CD8-positive, alpha-beta T cell (primary cell): ENCODE measurements at regions of chr7 and their contacts with region 1.

Region 1: GRCh38 chr7:140653319-140654108 is 12.9 kb upstream of the DENND2A start:
- DNase-seq: peak in 5 of 9 experiments; percentile 25 to 69 (median 55)
- ATAC-seq: peak; percentile 33
- H3K4me3 ChIP-seq: no peak overlapping the region
- H3K4me3 Mint-ChIP-seq: no peak overlapping the region
- H3K27ac ChIP-seq: no peak overlapping the region
- H3K27ac Mint-ChIP-seq: no peak overlapping the region
- H3K4me1 ChIP-seq: peaks cover 17% of the 10 kb centered on the region
- H3K4me1 Mint-ChIP-seq: peaks cover 22% of the 10 kb centered on the region
- H3K27me3 ChIP-seq: no peaks in the 10 kb centered on the region
- H3K27me3 Mint-ChIP-seq: peaks cover 15% of the 10 kb centered on the region
- CTCF ChIP-seq: peak; percentile 91

Region 2: GRCh38 chr7:139950848-139951512 is 702.5 kb before region 1 on chr7:
- CTCF ChIA-PET with region 1: no interaction called
- POLR2A ChIA-PET with region 1: no interaction called
- intact Hi-C with region 1: no loop called
- DNase-seq: no peak
- ATAC-seq: no peak
- H3K4me3 ChIP-seq: no peak overlapping the region
- H3K4me3 Mint-ChIP-seq: no peak overlapping the region
- H3K27ac ChIP-seq: no peak overlapping the region
- H3K27ac Mint-ChIP-seq: no peak overlapping the region
- H3K4me1 ChIP-seq: no peaks in the 10 kb centered on the region
- H3K4me1 Mint-ChIP-seq: no peaks in the 10 kb centered on the region
- H3K27me3 ChIP-seq: no peaks in the 10 kb centered on the region
- H3K27me3 Mint-ChIP-seq: no peaks in the 10 kb centered on the region
- CTCF ChIP-seq: no peak

Region 3: DNA sequence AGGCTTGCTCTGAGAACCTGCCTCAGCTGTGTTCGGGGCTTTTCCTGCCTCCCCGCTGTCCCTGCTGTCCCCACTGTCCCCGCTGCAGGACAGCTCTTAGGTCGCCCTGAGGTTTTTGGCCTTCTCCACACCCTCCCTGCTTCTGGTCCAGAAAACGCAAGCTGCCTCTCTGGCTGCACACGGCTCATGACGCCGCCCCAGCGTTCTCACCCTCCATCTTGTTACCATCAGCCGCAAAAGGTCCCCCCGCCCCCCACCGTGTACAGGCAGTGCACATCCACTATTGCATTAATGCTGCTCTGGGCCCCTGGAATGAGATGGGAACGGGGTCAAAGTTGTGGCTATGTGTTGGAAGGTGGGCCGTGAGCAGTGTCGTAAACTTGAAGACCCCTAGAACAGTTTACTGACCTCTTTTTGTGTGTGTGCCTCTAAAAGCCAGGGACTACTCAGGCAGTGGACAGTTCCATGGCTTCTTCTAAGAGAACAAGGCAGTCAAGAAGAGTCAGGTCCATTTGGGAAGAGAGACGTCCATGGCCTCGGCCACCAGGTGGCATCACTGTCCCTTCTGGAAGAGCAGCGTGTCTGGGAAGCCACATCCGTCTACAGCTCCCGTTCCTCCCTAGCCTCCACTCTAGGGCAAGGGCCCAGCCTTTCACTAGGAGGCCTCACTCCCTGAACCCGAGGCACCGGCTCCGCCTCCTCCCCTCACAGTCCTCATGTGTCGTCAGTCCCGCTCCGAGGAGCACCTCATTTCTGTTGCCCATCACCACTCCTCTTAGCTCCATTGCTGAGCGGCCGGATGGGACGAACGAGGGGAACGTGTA is 135.8 kb before region 1 on chr7:
- CTCF ChIA-PET with region 1: interaction called, 8 read pairs
- POLR2A ChIA-PET with region 1: no interaction called
- intact Hi-C with region 1: loop called (anchors 1 to 5 kb)
- DNase-seq: peak; percentile 16 to 79 (median 69)
- ATAC-seq: peak; percentile 62
- H3K4me3 ChIP-seq: no peak overlapping the region
- H3K4me3 Mint-ChIP-seq: no peak overlapping the region
- H3K27ac ChIP-seq: no peak overlapping the region
- H3K27ac Mint-ChIP-seq: no peak overlapping the region
- H3K4me1 ChIP-seq: no peaks in the 10 kb centered on the region
- H3K4me1 Mint-ChIP-seq: peaks cover 4% of the 10 kb centered on the region
- H3K27me3 ChIP-seq: no peaks in the 10 kb centered on the region
- H3K27me3 Mint-ChIP-seq: peaks cover 9% of the 10 kb centered on the region
- CTCF ChIP-seq: peak; percentile 28

Region 4: DNA sequence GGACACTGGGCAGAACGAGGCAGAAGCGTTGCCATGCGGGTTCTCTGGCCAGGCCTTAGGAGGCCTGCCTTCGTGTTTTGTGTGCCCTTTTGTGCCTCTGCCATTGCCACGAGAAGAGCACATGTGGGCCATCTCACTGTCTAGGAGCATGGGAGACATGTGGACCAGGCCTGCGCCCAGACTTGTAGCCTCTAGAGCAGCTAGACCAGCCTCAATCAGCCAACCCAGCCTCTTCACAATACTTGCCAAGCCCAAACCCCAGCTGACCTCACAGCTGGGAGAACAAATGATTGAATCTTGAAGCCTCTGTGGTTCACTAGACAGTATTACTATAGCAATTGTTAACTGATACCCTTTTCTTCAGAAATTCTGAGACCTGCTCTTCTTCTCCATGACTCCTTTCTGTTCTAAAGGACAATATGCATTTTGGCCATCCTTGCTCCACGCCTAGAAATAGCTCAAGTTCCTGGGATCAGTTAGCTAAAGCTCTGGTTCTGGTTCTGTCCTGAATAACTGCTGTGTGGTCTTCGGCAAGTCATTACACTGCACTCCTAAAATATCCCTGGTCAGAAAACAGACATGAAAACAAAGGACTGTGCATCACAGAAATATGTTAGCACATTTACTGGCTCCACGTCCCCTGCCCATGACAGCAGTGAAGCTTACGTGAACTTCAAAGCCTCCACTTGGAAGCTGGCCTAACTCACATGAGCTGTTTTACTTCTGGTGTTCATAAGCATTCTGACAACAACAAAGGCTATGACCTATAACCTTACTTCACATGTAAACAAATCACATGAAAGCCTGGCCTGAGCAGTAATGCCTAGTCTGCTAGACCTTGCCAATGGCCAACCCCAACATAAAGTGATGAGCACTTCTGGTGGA is 101.9 kb before region 1 on chr7:
- CTCF ChIA-PET with region 1: no interaction called
- POLR2A ChIA-PET with region 1: no interaction called
- intact Hi-C with region 1: no loop called
- DNase-seq: no peak
- ATAC-seq: no peak
- H3K4me3 ChIP-seq: no peak overlapping the region
- H3K4me3 Mint-ChIP-seq: no peak overlapping the region
- H3K27ac ChIP-seq: no peak overlapping the region
- H3K27ac Mint-ChIP-seq: no peak overlapping the region
- H3K4me1 ChIP-seq: no peaks in the 10 kb centered on the region
- H3K4me1 Mint-ChIP-seq: no peaks in the 10 kb centered on the region
- H3K27me3 ChIP-seq: no peaks in the 10 kb centered on the region
- H3K27me3 Mint-ChIP-seq: peaks cover 2% of the 10 kb centered on the region
- CTCF ChIP-seq: no peak

Region 5: GRCh38 chr7:140640727-140641523 is 12.6 kb before region 1 on chr7 and contains the start of gene DENND2A:
- CTCF ChIA-PET with region 1: interaction called, 18 read pairs
- POLR2A ChIA-PET with region 1: no interaction called
- intact Hi-C with region 1: no loop called
- DNase-seq: peak in 1 of 9 experiments; percentile 13
- ATAC-seq: peak; percentile 29
- H3K4me3 ChIP-seq: peak within 1 kb of the TSS; percentile 22 to 39
- H3K4me3 Mint-ChIP-seq: peak within 1 kb of the TSS; percentile 88
- H3K27ac ChIP-seq: no peak within 1 kb of the TSS
- H3K27ac Mint-ChIP-seq: no peak within 1 kb of the TSS
- H3K4me1 ChIP-seq: peaks cover 16% of the 10 kb centered on the region
- H3K4me1 Mint-ChIP-seq: peaks cover 18% of the 10 kb centered on the region
- H3K27me3 ChIP-seq: peaks cover 14 to 22% of the 10 kb centered on the region in 2 experiments
- H3K27me3 Mint-ChIP-seq: peaks cover 56% of the 10 kb centered on the region
- CTCF ChIP-seq: no peak
- total RNA-seq, gene DENND2A: 0.27 TPM in 1 of 2 experiments, not detected in the other

Region 6: GRCh38 chr7:140686921-140687320 is 33.4 kb after region 1 on chr7:
- CTCF ChIA-PET with region 1: interaction called, 10 read pairs
- POLR2A ChIA-PET with region 1: no interaction called
- intact Hi-C with region 1: no loop called
- DNase-seq: peak in 1 of 9 experiments; percentile 35
- ATAC-seq: no peak
- H3K4me3 ChIP-seq: no peak overlapping the region
- H3K4me3 Mint-ChIP-seq: no peak overlapping the region
- H3K27ac ChIP-seq: no peak overlapping the region
- H3K27ac Mint-ChIP-seq: no peak overlapping the region
- H3K4me1 ChIP-seq: no peaks in the 10 kb centered on the region
- H3K4me1 Mint-ChIP-seq: no peaks in the 10 kb centered on the region
- H3K27me3 ChIP-seq: no peaks in the 10 kb centered on the region
- H3K27me3 Mint-ChIP-seq: no peaks in the 10 kb centered on the region
- CTCF ChIP-seq: no peak

Region 7: DNA sequence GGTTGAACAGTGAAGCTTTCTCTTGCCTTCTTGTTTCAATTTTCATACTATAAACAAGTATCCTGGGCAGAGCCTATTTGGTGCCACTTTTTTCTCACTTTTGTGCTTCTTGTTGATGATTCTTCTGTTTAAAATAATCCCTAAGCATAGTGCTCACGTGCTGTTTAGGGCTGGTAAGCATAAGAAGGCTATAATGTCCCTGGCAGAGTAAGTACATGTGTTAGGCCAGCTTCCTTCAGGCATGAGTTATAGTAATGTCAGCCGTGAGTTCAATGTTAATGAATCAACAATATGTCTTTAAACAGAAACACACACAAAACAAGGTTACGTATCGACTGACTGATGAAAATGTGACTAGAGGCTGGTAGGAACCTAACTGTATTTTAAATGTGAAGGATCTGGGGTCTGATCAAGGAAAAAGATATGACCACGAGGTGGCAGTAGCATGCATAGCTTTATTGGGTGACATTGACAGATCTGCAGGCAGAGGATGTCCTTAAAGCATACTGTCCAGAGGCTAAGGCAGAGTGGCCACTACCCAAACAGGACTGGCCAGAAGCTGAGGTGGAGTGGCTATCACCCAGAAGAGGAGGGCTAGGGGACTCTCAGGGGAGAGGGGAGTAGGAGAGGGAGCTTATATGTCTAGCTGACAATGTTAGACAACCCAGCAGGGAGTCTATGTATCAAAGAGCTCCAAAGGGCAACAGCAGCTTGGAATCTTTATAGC is 157.5 kb after region 1 on chr7:
- CTCF ChIA-PET with region 1: no interaction called
- POLR2A ChIA-PET with region 1: no interaction called
- intact Hi-C with region 1: no loop called
- DNase-seq: peak; percentile 17 to 82 (median 61)
- ATAC-seq: peak; percentile 72
- H3K4me3 ChIP-seq: no peak overlapping the region
- H3K4me3 Mint-ChIP-seq: no peak overlapping the region
- H3K27ac ChIP-seq: no peak overlapping the region
- H3K27ac Mint-ChIP-seq: no peak overlapping the region
- H3K4me1 ChIP-seq: no peaks in the 10 kb centered on the region
- H3K4me1 Mint-ChIP-seq: peaks cover 4% of the 10 kb centered on the region
- H3K27me3 ChIP-seq: no peaks in the 10 kb centered on the region
- H3K27me3 Mint-ChIP-seq: no peaks in the 10 kb centered on the region
- CTCF ChIP-seq: peak; percentile 76

Region 8: GRCh38 chr7:141178486-141179135 is 525.1 kb after region 1 on chr7:
- CTCF ChIA-PET with region 1: no interaction called
- POLR2A ChIA-PET with region 1: no interaction called
- intact Hi-C with region 1: no loop called
- DNase-seq: no peak
- ATAC-seq: no peak
- H3K4me3 ChIP-seq: no peak overlapping the region
- H3K4me3 Mint-ChIP-seq: no peak overlapping the region
- H3K27ac ChIP-seq: no peak overlapping the region
- H3K27ac Mint-ChIP-seq: no peak overlapping the region
- H3K4me1 ChIP-seq: no peaks in the 10 kb centered on the region
- H3K4me1 Mint-ChIP-seq: peaks cover 4% of the 10 kb centered on the region
- H3K27me3 ChIP-seq: peaks cover 0 to 3% of the 10 kb centered on the region in 2 experiments
- H3K27me3 Mint-ChIP-seq: no peaks in the 10 kb centered on the region
- CTCF ChIP-seq: no peak